Endothelial cell of umbilical vein (primary cell): ENCODE measurements at regions of chr2 and their contacts with region 1.

Region 1: GRCh38 chr2:158600155-158600802 is 143.5 kb downstream of the PKP4 start:
- DNase-seq: peak; percentile 99
- H3K4me3 ChIP-seq: no peak overlapping the region
- H3K27ac ChIP-seq: peak overlapping the region; percentile 83
- H3K4me1 ChIP-seq: peaks cover 27% of the 10 kb centered on the region
- H3K27me3 ChIP-seq: no peaks in the 10 kb centered on the region
- CTCF ChIP-seq: no peak
- POLR2A ChIP-seq: no peak

Region 2: GRCh38 chr2:157269922-157270321 is 1330.4 kb before region 1 on chr2:
- CTCF ChIA-PET with region 1: no interaction called
- POLR2A ChIA-PET with region 1: no interaction called
- dilution Hi-C with region 1: no loop called
- intact Hi-C with region 1: no loop called
- DNase-seq: no peak
- H3K4me3 ChIP-seq: no peak overlapping the region
- H3K27ac ChIP-seq: no peak overlapping the region
- H3K4me1 ChIP-seq: no peaks in the 10 kb centered on the region
- H3K27me3 ChIP-seq: no peaks in the 10 kb centered on the region
- CTCF ChIP-seq: no peak
- POLR2A ChIP-seq: no peak

Region 3: GRCh38 chr2:158006961-158007719 is 593.1 kb before region 1 on chr2:
- CTCF ChIA-PET with region 1: no interaction called
- POLR2A ChIA-PET with region 1: no interaction called
- dilution Hi-C with region 1: no loop called
- intact Hi-C with region 1: no loop called
- DNase-seq: no peak
- H3K4me3 ChIP-seq: no peak overlapping the region
- H3K27ac ChIP-seq: no peak overlapping the region
- H3K4me1 ChIP-seq: peaks cover 10% of the 10 kb centered on the region
- H3K27me3 ChIP-seq: no peaks in the 10 kb centered on the region
- CTCF ChIP-seq: no peak
- POLR2A ChIP-seq: no peak

Region 4: GRCh38 chr2:158214438-158214837 is 385.8 kb before region 1 on chr2:
- CTCF ChIA-PET with region 1: no interaction called
- POLR2A ChIA-PET with region 1: no interaction called
- dilution Hi-C with region 1: no loop called
- intact Hi-C with region 1: loop called (anchors 1 kb)
- DNase-seq: peak; percentile 82
- H3K4me3 ChIP-seq: no peak overlapping the region
- H3K27ac ChIP-seq: peak overlapping the region; percentile 63
- H3K4me1 ChIP-seq: peaks cover 8% of the 10 kb centered on the region
- H3K27me3 ChIP-seq: peaks cover 3 to 4% of the 10 kb centered on the region in 2 experiments
- CTCF ChIP-seq: no peak
- POLR2A ChIP-seq: no peak

Region 5: DNA sequence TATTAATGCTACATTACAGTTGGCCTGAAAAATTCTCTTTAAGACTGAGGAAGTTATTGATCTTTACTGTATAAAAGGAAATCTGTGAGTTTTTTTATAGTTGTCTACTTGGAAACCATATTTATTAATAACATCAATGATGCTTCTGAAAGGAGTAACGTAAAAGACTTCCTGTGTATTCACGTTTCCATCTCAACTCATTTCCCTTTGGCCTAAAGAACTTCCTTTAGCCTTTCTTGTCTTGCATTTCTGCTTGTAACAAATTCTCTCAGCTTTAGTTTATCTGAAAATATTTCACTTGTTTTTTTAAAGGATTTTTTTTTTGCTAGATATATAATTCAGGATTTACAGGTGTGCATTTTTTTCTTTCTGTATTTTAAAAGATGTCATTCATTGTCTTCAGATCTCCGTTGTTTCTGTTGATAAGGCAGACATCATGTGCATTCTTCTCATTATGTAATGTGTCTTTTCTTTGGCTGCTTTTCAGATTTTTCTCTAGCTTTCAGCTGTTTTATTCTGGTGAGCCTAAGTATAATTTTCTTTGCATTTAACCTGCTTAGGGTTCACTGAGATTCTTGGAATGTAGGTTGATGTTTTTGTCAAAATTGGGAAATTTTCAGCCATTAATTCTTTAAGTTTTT is 35.8 kb after region 1 on chr2:
- CTCF ChIA-PET with region 1: interaction called, 5 read pairs
- POLR2A ChIA-PET with region 1: no interaction called
- dilution Hi-C with region 1: no loop called
- intact Hi-C with region 1: loop called (anchors 1 kb)
- DNase-seq: peak; percentile 75
- H3K4me3 ChIP-seq: no peak overlapping the region
- H3K27ac ChIP-seq: peak overlapping the region; percentile 61
- H3K4me1 ChIP-seq: peaks cover 14% of the 10 kb centered on the region
- H3K27me3 ChIP-seq: no peaks in the 10 kb centered on the region
- CTCF ChIP-seq: no peak
- POLR2A ChIP-seq: no peak

Region 6: DNA sequence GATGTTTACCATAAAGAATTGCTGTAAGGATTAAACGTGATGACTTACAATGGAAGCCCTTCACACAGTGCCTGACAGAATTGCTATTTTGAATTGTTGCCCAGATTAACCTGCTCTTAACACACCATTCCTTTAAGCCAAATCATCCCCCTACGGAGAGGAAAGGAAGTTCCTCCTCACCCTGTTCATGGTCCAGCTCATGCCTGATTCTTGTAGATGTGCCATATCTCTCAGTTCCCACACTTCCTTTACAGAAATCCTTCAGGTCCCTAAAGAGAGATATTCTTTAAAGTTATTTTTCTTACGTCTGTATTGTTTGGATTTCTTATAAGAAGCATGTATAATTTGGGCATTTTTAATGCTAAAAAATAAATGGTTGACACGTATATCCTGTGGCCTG is 67.3 kb after region 1 on chr2:
- CTCF ChIA-PET with region 1: interaction called, 8 read pairs
- POLR2A ChIA-PET with region 1: interaction called, 4 read pairs
- dilution Hi-C with region 1: no loop called
- intact Hi-C with region 1: loop called (anchors 1 kb)
- DNase-seq: peak; percentile 97
- H3K4me3 ChIP-seq: peak overlapping the region in 1 of 3 experiments; percentile 30
- H3K27ac ChIP-seq: peak overlapping the region; percentile 82
- H3K4me1 ChIP-seq: peaks cover 34% of the 10 kb centered on the region
- H3K27me3 ChIP-seq: no peaks in the 10 kb centered on the region
- CTCF ChIP-seq: no peak
- POLR2A ChIP-seq: peak; percentile 61